ENCODE measurements at regions of chr7 and their contacts with region 1.

Region 1: DNA sequence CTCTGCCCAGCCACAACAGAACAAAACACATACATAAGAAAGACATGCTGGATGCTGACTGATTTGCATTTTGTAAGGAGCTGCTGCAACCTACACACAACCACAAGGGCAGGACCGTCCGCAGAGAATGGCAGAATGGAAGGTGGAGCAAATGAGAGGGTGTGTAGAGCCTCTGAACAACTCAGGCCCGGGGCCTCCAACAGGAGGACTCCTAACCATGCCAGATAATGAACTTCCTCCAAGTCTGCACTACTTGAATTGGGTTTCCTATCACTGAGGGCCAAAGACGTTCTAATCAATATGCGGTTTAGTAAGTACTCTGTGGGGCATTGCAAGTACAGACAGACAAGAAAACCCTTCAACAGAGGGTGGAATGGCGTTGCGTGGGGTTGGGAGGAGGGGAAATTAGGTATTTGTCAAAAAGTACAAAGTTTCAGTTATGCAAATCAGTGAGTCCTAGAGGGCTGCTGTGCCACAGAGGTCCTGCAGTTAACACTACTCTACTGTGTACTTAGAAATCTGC is 14.6 kb downstream of the VOPP1 start:
- DNase-seq: peak; percentile 39
- ATAC-seq: peak; percentile 83
- H3K4me3 Mint-ChIP-seq: peak overlapping the region; percentile 79
- H3K27ac Mint-ChIP-seq: peak overlapping the region; percentile 88
- H3K4me1 Mint-ChIP-seq: peaks cover 97% of the 10 kb centered on the region
- H3K27me3 Mint-ChIP-seq: no peaks in the 10 kb centered on the region
- CTCF ChIP-seq: no peak

Region 2: DNA sequence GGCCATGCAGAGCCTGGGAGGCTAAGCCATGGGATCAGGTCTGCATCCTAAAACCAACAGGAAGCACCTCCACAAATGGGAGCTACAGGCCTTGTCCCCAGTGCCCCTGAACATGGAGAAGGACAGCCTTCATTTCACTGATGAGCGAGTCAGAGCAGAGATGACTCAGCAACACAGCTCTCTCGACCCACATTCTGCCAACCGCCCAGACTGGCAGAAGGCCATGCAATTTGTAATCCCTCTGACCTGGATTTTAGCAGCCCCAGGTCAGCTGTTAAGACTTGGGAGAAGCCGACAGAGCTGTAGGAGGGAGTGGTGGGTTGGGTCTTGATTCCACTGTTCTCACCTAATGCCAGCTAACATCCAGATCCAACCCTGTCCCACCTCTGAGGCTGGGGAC is 10.9 kb before region 1 on chr7:
- CTCF ChIA-PET with region 1: interaction called, 4 read pairs
- POLR2A ChIA-PET with region 1: interaction called, 21 read pairs
- intact Hi-C with region 1: loop called (anchors 1 kb)
- DNase-seq: no peak
- ATAC-seq: peak; percentile 56
- H3K4me3 Mint-ChIP-seq: peak overlapping the region; percentile 19
- H3K27ac Mint-ChIP-seq: peak overlapping the region; percentile 77
- H3K4me1 Mint-ChIP-seq: peaks cover 89% of the 10 kb centered on the region
- H3K27me3 Mint-ChIP-seq: no peaks in the 10 kb centered on the region
- CTCF ChIP-seq: no peak

Region 3: DNA sequence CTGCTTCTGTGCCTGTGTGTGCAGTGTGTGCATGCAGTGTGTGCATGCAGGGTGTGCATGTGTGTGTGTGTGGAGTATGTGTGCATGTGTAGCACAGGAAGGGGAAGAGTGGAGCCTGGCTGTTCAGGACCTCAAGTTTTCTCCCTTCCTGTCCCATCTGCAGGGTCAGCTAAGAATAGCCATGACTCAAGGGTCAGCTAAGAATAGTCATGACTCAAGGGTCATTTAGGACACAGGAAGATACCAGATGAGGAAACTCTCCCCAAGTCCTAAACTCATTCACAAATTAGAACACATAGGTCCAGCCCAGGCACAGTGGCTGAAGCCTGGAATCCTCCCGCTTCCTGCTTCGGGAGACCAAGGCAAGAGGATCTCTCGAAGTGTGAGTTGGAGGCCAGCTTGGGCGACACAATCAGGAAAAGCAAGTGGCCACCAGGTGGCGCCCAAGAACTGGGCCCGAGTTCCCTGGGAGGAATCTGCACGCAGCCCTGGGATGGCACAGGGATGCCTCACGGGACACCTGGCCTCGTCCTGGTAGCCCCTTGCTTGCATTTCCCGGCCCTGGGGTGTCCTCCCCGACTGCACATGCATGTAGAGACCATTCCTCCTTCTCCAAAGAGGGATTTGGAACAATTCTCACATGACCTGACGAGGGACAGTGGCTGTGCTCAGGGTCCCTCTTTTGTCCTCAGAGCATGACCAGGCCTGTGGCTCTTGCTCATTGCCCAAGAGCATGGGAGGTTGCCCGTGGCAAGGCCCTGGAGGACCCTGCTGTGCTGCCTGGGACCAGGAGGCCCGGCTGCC is 36.0 kb after region 1 on chr7:
- CTCF ChIA-PET with region 1: interaction called, 3 read pairs
- POLR2A ChIA-PET with region 1: no interaction called
- intact Hi-C with region 1: loop called (anchors 2 kb)
- DNase-seq: peak; percentile 58
- ATAC-seq: no peak
- H3K4me3 Mint-ChIP-seq: no peak overlapping the region
- H3K27ac Mint-ChIP-seq: no peak overlapping the region
- H3K4me1 Mint-ChIP-seq: peaks cover 41% of the 10 kb centered on the region
- H3K27me3 Mint-ChIP-seq: no peaks in the 10 kb centered on the region
- CTCF ChIP-seq: no peak

Measured in activated B cell treated with CpG ODN at 0.5 μM for 24 hours (primary cell).